Posterior vena cava (tissue), 2 donors: ENCODE measurements at regions of chr4 and their contacts with region 1.

Region 1: DNA sequence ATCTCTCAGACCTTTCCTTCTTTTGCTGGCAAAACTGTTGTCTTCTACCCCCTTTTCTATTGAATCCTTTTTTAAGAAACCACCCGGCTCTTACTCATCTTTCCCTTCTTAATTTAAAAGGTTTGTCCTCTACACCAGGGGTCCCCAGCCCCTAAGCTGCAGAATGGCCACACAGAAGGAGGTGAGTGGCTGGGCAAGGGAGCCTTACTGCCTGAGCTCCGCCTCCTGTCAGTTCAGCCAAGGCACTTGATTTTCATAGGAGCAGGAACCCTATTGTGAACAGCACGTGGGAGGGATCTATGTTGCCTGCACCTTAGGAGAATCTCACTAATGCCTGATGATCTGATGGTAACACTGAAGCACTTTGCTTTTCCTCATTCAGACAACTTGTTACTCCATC is 726.3 kb upstream of the INTU start:
- DNase-seq: no peak

Region 2: DNA sequence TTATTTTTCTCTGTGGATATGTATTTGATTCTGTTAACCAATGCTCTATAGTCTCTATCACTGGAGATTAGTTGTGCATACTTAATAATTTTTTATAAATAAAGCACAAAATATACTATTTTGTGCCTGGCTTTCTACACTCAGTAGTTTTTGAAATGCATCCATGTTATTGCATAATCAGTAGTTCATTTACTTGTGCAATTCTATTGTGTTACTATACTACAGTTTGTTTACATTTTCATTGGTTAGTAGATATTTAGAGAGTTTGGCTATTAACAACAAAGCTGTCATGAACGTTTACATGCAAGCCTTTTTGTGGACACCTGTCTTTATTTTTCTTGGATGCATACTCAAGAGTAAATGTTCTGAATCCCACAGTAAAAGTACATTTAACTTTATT is 1856.8 kb before region 1 on chr4:
- intact Hi-C with region 1: no loop called
- DNase-seq: no peak

Region 3: DNA sequence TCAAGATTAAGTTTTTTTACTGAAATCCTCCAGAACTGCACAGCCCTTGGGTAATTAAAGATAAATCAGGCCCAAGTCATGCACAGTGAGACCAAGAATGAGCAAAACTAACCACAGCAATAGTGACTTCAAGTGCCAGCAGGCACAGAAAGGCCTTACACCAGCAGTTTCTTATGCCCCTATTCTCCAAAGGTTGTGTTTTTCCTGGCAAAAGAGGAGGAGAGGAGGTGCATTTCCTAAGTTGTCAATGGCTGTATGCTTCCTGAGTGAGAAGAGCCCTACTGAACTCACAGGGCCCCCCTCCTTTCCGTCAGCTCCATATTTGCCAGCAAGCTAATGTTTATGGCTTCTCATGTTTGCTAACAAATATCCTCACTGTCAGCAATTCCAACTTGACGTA is 307.6 kb after region 1 on chr4:
- intact Hi-C with region 1: no loop called
- DNase-seq: no peak

Region 4: DNA sequence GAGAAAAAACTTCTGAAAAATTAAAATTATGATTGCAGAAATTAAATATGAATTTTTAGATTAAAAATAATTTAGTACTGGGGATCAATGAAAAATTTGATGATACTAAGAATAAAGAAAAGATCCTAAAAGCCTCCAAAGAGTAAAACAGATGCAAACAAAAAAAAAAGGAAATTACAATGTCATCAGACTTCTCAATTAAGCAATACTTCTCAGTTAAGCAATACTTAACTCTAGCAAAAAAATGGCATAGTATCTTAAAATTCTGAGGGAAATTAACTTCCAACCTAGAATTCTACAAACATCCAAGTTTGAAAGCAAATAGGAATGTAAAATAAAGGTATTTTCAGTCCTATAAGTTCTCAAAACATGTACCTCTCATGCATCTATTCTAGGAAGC is 585.1 kb after region 1 on chr4:
- intact Hi-C with region 1: loop called in 1 of 2 experiments (anchors 10 kb)
- DNase-seq: no peak

Region 5: DNA sequence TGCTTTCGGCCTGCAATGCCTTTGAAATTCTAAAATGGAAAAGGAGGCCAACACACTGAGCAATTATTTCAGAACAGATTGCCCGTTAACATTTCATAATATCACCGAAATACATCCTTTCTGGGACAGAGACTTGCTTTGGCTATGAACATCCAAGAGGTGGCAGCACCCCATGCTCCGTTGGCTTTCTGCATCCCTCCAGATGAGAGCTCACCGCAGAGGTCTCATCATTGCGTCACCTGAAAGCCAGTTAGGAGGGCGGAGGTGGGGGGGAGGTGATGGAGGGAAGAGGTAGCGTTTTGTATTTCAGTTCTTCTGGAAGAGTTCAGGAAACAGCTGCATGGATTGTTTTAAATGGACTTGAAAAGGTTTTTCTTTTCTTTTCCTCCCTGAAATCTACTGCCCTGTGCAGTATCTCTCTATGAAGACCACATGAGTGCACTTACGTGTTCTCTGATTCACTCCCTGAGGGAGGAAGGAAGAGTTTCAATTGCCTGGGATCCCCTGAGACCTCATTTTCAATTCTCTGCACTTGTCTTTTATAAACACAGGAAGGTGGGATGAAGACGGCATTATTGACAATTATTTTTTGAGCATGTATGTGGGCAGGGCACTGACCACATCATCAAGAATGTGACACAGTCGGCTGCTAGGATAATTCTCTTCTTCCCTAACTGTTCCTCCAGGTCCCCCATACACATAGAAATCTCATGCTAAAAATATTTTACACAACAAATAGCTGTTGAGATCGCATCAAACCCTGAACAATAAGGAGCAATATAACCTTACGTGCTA is 1548.0 kb after region 1 on chr4:
- intact Hi-C with region 1: no loop called
- DNase-seq: peak; percentile 93